Activated CD4-positive, alpha-beta T cell treated with anti-CD3 and anti-CD28 coated beads for 36 hours (primary cell): ENCODE measurements at regions of chrX and their contacts with region 1.

Region 1: DNA sequence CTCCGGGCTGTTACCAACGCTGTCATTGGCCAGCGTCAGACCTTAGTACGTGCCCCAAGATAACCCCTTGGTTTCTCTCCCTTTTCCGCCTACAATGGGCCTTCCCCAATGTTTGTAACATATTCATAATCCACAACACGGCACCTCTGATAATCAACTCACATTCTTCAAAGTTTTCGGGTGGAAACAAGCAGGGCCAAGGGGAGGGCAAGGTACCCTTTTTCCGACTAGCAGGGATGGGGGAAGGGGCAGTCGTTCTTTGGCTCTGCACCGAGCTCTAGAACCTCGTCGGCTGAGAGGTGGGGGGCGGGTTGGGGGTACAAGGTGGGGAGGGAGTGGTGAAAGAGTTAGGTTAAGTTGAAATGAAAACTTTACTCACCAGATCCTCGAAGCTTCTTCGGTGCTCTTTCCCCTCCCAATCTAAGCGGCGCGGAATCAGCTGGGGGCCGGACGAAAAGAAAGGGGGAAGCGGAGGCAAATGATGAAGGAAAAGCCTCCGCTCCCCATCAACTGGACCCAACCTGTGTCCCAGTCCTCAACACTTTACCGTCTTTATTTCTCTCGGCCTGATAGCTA is 1.4 kb downstream of the BRWD3 start:
- DNase-seq: peak; percentile 81
- ATAC-seq: peak; percentile 66
- H3K4me3 Mint-ChIP-seq: peak overlapping the region; percentile 88
- H3K27ac Mint-ChIP-seq: peak overlapping the region; percentile 93
- H3K4me1 Mint-ChIP-seq: peaks cover 25% of the 10 kb centered on the region
- H3K27me3 Mint-ChIP-seq: no peaks in the 10 kb centered on the region

Region 2: GRCh38 chrX:81201671-81202455 is 393.6 kb after region 1 on chrX and contains the starts of genes HMGN5 and SH3BGRL:
- CTCF ChIA-PET with region 1: no interaction called
- POLR2A ChIA-PET with region 1: interaction called, 5 read pairs
- intact Hi-C with region 1: loop called (anchors 2 to 5 kb)
- DNase-seq: peak; percentile 80
- ATAC-seq: peak; percentile 97
- H3K4me3 Mint-ChIP-seq: peak within 1 kb of the TSS; percentile 88
- H3K27ac Mint-ChIP-seq: peak within 1 kb of the TSS; percentile 97
- H3K4me1 Mint-ChIP-seq: peaks cover 32% of the 10 kb centered on the region
- H3K27me3 Mint-ChIP-seq: no peaks in the 10 kb centered on the region
- total RNA-seq, gene HMGN5: 5.5 to 6.6 TPM
- total RNA-seq, gene SH3BGRL: 34.5 to 46.9 TPM

Region 3: DNA sequence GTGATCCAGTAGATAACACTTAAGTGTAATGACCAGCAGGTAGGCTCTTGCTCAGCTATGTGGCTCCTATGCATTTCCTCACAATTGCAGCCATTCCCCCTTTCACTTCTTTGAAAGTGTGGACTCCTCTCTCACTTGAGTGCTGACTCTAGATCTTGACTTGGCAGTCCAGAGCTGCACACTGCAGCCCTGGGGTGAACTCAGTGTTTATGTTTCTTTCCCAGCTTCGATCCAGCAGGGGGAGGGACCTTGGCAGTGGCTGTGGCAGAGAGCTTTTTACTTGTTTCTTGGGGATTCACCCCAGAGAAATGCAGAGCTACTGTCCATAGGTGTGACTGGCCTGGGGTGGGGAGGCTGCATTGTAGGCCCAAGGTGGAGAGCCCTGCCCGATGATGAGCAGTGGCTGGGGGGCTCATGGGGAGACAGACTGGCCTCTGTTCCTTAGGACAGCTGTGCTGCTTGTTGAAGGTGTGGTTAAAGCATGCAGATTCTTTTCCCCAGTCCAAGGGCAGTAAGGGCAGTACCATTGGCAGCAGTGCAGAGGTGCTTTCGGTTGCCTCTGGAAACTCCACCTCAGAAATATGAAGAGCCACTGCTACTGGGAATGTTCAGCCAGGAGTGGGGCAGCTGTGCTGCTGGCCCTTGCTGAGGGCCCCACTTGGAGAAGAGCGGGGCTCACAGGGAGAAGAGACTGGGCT is 528.4 kb after region 1 on chrX:
- CTCF ChIA-PET with region 1: no interaction called
- POLR2A ChIA-PET with region 1: no interaction called
- intact Hi-C with region 1: loop called in 1 of 2 experiments (anchors 10 kb)
- DNase-seq: no peak
- ATAC-seq: no peak
- H3K4me3 Mint-ChIP-seq: no peak overlapping the region
- H3K27ac Mint-ChIP-seq: no peak overlapping the region
- H3K4me1 Mint-ChIP-seq: peaks cover 6% of the 10 kb centered on the region
- H3K27me3 Mint-ChIP-seq: no peaks in the 10 kb centered on the region